ENCODE measurements at regions of chr1 and their contacts with region 1.

Region 1: GRCh38 chr1:31715087-31715872 is 11.5 kb upstream of the COL16A1 start:
- DNase-seq: peak; percentile 39
- H3K4me3 ChIP-seq: peak overlapping the region; percentile 12 to 22
- H3K27ac ChIP-seq: peak overlapping the region; percentile 76 to 85
- H3K4me1 ChIP-seq: no peaks in the 10 kb centered on the region
- H3K27me3 ChIP-seq: peaks cover 4% of the 10 kb centered on the region
- CTCF ChIP-seq: peak in 3 of 4 experiments; percentile 50 to 78 (median 73)
- POLR2A ChIP-seq: peak; percentile 67

Region 2: GRCh38 chr1:31576201-31576669 is 139.0 kb before region 1 on chr1 and contains the start of gene TINAGL1:
- intact Hi-C with region 1: loop called (anchors 5 kb)
- DNase-seq: peak; percentile 85
- H3K4me3 ChIP-seq: peak within 1 kb of the TSS; percentile 36 to 42
- H3K27ac ChIP-seq: peak within 1 kb of the TSS; percentile 77 to 79
- H3K4me1 ChIP-seq: no peaks in the 10 kb centered on the region
- H3K27me3 ChIP-seq: no peaks in the 10 kb centered on the region
- CTCF ChIP-seq: peak in 1 of 4 experiments; percentile 17
- POLR2A ChIP-seq: peak; percentile 97
- total RNA-seq, gene TINAGL1: 103 to 134 TPM

Region 3: DNA sequence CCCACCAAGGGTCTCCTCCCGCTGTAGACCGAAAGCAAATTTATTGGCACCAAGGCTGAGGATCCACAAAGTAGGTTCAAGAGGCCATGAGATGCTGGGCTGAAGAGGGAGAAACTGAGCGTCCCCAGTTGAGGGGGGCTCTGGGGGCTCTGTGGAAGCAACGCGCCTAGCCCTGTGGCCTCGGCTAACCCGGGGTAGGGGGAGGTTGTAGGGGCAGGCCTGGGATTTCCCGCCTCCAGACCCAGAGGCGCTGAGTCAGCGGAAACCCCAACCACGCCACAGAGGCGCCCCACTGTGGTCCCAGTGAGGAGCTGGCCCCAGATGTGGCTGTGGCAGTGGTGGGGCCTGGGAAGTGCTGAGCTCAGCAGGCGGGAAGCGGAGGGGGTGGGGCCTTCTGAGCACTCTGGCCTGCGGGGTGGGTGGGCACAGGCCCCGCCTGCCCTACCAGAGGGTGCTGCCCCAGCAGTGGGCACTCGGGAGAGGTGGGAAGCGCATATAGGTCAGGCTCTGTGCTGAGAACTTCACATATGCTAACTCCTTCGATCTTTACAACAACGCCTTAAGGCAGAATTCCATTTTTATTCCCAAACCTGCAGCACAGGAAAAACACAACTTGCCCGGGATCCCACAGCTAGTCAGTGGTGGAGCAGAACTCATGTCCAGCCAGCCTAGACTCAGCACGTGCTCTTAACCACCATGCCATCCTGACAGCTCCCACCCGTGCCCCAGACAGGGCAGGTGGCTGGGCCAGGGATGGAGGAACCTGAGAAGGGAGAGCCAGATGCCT is 10.0 kb before region 1 on chr1:
- intact Hi-C with region 1: loop called (anchors 2 kb)
- DNase-seq: peak; percentile 19
- H3K4me3 ChIP-seq: no peak overlapping the region
- H3K27ac ChIP-seq: peak overlapping the region; percentile 73 to 84
- H3K4me1 ChIP-seq: peaks cover 16% of the 10 kb centered on the region
- H3K27me3 ChIP-seq: no peaks in the 10 kb centered on the region
- CTCF ChIP-seq: peak in 2 of 4 experiments; percentile 33 to 37
- POLR2A ChIP-seq: no peak